Activated T-helper 1 cell treated with anti-CD3 and anti-CD28 coated beads, Interleukin-12 subunit alpha, Interleukin-12 subunit beta, Interleukin-2, Interleukin-4 antibody, amounts not matched to agents 30 ng/mL and 10 ng/mL and 1 ng/mL, durations not matched to agents 14 hours and 24 hours and 36 hours (primary cell): ENCODE measurements at regions of chr7 and their contacts with region 1.

Region 1: DNA sequence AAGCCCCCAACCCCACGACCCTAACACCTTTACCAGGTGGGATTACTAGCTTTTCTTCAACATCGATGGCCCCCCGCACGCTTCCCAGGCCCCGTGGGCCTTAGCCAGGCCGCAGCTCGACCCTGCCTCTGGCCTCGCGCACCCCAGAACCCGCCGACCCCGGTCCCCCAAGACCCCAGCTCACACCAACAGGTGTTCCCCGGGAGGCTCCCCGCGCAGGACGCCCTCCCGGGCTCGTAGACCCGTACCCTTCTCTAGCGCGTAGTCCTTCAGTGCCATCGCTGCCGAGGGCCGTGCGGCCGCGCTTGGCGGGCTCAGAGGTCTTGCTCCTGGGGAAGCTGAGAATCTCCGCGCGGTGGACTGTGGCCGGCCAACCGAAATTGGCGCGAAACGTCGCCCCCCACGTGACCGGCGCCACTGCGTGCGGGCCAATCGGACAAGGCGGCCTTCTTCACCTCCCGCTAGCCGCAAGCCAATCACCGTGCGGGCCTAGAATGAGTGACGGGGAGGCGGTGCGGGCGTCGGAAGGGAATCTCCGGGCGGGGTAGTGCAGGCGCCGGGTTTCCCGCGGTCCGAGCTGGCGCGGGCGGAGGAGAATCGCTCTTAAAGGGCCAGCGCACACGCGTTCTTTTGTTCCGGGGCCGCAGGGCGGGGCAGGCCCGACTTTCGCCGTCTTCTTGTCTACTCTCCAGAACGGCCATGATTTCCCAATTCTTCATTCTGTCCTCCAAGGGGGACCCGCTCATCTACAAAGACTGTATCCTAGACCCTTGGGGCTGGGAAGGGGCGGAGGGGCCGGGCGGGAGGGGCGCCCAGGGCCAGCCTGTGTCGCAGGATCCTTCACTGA is at the starts of genes AP4M1 and MCM7:
- DNase-seq: peak; percentile 98
- H3K4me3 Mint-ChIP-seq: peak within 1 kb of the TSS; percentile 94
- H3K27ac Mint-ChIP-seq: peak within 1 kb of the TSS; percentile 97
- H3K4me1 Mint-ChIP-seq: peaks cover 39% of the 10 kb centered on the region
- H3K27me3 Mint-ChIP-seq: no peaks in the 10 kb centered on the region
- total RNA-seq, gene AP4M1: 12.3 and 15.9 TPM in 2 replicates
- total RNA-seq, gene MCM7: 447 and 452 TPM in 2 replicates

Region 2: DNA sequence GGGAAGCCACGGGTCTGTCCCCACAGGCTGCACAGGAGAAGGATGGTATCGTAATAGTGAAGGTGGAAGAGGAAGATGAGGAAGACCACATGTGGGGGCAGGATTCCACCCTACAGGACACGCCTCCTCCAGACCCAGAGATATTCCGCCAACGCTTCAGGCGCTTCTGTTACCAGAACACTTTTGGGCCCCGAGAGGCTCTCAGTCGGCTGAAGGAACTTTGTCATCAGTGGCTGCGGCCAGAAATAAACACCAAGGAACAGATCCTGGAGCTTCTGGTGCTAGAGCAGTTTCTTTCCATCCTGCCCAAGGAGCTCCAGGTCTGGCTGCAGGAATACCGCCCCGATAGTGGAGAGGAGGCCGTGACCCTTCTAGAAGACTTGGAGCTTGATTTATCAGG is 77.7 kb before region 1 on chr7:
- intact Hi-C with region 1: no loop called
- DNase-seq: no peak
- H3K4me3 Mint-ChIP-seq: no peak overlapping the region
- H3K27ac Mint-ChIP-seq: peak overlapping the region; percentile 44
- H3K4me1 Mint-ChIP-seq: peaks cover 53% of the 10 kb centered on the region
- H3K27me3 Mint-ChIP-seq: no peaks in the 10 kb centered on the region

Region 3: DNA sequence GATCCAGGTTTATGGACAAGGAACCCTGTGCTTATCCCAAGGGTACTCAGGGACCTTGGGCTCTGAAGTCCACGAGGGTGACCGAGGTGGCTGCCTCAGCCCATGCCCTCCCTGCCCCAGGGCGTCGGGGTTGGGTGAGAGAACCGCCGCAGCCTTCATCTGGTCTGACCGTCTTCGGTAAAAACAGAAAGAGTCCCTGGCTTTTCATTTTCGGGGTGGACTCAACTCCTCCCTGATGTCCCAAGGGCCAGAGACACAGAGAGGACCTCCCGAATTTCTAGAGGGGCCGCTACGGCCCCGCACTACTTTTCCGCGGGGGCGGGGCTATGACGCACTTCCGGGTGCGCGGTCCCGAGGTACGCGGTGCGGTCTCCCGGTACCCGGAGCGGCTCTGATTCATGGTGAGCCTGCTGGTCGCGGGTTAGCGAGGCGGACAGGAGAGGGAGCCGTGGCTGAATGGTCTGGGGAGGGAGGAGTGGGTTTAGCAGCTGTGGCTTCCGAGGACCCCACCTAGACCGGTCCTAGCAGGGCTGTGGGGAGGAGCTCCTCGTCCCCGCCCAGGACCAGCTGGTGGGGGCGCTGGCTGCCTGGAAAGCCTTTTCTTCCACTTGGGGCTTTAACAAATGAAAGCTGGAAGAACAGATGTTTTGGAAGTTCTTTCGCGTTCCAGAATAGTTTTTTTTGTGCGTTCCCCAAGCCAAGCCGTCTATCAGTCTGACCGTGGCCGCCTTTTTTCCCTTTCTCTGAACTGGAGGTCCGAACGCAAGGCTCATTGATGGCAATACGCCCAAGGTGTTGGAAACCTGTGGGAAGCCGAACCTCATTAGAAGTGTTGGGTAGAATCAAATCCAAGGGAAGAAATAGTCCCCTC is 51.6 kb before region 1 on chr7 and contains the start of gene ZSCAN21:
- intact Hi-C with region 1: loop called (anchors 1 kb)
- DNase-seq: peak; percentile 79
- H3K4me3 Mint-ChIP-seq: peak within 1 kb of the TSS; percentile 88
- H3K27ac Mint-ChIP-seq: peak within 1 kb of the TSS; percentile 92
- H3K4me1 Mint-ChIP-seq: peaks cover 13% of the 10 kb centered on the region
- H3K27me3 Mint-ChIP-seq: peaks cover 2% of the 10 kb centered on the region
- total RNA-seq, gene ZSCAN21: 6.8 and 9.8 TPM in 2 replicates

Region 4: GRCh38 chr7:100119062-100119700 is 17.9 kb after region 1 on chr7 and contains the starts of genes CNPY4 and TAF6:
- intact Hi-C with region 1: loop called (anchors 1 kb)
- DNase-seq: peak; percentile 90
- H3K4me3 Mint-ChIP-seq: peak within 1 kb of the TSS; percentile 98
- H3K27ac Mint-ChIP-seq: peak within 1 kb of the TSS; percentile 97
- H3K4me1 Mint-ChIP-seq: peaks cover 16% of the 10 kb centered on the region
- H3K27me3 Mint-ChIP-seq: no peaks in the 10 kb centered on the region
- total RNA-seq, gene CNPY4: 19.6 and 21.7 TPM in 2 replicates
- total RNA-seq, gene TAF6: 72.9 and 79.2 TPM in 2 replicates

Region 5: DNA sequence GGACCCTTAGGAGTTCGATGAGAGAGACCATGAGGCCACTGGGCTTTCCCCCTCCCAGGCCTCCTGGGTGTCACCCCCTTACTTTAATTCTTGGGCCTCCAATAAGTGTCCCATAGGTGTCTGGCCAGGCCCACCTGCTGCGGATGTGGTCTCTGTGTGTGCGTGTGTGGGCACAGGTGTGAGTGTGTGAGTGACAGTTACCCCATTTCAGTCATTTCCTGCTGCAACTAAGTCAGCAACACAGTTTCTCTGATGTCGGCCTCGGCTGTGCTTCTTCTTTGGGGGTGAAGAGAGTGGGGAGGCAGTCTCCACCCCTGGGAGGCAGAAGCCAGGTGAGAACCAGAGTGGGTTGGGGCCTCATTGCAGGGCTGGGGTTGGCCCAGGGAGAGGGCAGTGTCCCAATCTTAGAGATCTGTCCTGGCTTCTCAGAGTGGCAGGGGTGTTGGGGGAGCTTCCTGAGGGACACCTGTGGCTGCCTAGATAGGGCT is 120.0 kb after region 1 on chr7:
- intact Hi-C with region 1: loop called (anchors 1 kb)
- DNase-seq: peak; percentile 72
- H3K4me3 Mint-ChIP-seq: peak overlapping the region; percentile 96
- H3K27ac Mint-ChIP-seq: peak overlapping the region; percentile 99
- H3K4me1 Mint-ChIP-seq: peaks cover 60% of the 10 kb centered on the region
- H3K27me3 Mint-ChIP-seq: no peaks in the 10 kb centered on the region

Region 6: DNA sequence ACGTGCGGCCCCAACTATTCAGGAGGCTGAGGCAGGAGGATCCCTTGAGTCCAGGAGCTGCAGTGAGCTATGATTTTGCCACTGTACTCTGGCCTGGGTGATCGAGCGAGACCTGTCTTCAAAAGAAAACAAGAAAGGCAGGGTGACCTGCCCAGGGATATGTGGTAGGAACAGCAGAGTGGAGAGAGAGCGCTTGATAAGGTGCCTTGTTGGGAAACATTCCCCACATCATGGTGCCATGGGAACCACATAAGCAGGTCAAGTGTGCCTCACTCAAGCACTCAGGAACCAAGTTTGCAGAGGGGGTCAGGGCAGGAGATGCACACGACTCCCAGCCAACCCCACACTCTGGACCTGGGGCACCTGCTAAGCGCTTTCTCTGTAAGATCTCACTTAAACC is 155.8 kb after region 1 on chr7:
- intact Hi-C with region 1: no loop called
- DNase-seq: no peak
- H3K4me3 Mint-ChIP-seq: no peak overlapping the region
- H3K27ac Mint-ChIP-seq: no peak overlapping the region
- H3K4me1 Mint-ChIP-seq: no peaks in the 10 kb centered on the region
- H3K27me3 Mint-ChIP-seq: no peaks in the 10 kb centered on the region

Region 7: DNA sequence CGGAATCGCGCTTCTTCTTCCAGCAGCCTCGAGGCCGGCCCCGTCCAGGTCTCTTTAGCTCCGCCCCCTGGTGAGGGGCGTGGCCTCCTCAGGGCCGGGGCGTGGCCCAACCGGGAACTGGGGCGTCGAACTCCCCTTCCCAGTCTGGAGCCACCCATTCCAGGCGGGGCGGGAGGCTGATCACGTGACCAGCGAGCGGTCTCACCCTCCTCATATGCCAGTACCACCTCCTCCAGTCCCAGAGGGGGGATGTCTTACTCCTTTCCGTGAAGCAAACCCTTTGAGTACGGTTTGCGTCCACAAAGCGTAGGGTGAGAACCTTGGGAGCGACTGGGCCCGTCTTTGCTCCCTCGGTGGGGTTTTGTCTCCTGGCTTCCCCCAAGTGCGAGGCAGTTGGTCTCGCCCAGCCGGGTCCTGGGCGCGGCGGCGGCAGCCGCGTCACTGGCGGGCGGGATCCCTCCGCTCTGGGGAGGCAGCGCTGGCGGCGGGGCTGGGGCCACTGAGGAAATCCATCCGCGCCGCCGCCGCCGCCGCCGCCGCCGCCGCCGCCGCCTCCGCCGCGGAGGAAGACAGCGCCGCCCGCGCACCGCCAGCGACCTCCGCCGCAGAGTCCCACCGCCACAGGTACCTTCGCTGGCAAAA is 572.2 kb after region 1 on chr7 and contains the start of gene GNB2:
- intact Hi-C with region 1: loop called (anchors 1 kb)
- DNase-seq: peak; percentile 99
- H3K4me3 Mint-ChIP-seq: peak within 1 kb of the TSS; percentile 98
- H3K27ac Mint-ChIP-seq: peak within 1 kb of the TSS; percentile 94
- H3K4me1 Mint-ChIP-seq: peaks cover 10% of the 10 kb centered on the region
- H3K27me3 Mint-ChIP-seq: peaks cover 10% of the 10 kb centered on the region
- total RNA-seq, gene GNB2: 218 and 221 TPM in 2 replicates